WTC11 (cell line): ENCODE measurements at regions of chr2 and their contacts with region 1.

Region 1: DNA sequence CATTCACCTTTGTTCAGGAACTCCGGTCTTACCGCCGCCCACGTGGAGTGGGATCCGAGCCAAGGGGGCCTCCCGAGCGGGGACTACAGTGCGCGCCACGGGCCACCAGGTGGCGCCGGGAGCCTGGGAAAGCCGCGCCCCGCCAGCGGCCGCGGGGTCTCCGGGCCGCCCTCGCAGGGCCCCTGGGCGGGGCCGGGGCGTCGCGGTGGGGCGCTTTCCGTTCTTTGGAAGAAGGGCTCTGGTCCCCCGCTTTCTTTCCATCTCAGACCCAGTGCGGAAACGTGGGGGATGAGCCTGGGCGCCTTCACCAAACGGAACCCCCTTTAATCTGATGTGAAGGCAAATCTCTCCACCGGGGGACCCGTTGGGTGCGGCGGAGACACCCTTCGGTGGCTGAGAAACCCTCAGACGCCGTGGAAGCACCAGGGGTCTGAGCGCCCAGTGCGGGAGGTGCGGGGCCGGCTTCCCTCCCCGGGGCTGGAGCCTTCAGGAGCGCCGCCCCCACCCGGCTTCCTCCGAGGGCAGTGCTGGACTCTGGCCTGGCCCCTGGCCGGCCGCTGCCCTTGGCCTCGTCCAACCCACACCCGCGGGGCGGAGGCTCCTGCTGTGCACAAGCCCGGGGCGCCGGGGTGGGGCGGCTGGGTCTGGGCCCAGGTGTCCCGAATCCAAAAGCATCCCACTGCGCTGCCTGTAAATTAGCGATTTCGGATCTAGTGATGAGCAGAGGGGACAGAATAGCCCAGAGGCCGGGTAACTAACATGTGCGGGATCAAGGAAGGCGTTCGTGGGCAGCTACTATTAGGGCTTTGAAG is 44.6 kb downstream of the GORASP2 start:
- DNase-seq: peak; percentile 83
- ATAC-seq: peak; percentile 85
- H3K4me3 Mint-ChIP-seq: peak overlapping the region; percentile 57
- H3K27ac Mint-ChIP-seq: no peak overlapping the region
- H3K4me1 Mint-ChIP-seq: peaks cover 53% of the 10 kb centered on the region
- H3K27me3 Mint-ChIP-seq: peaks cover 4% of the 10 kb centered on the region
- CTCF ChIP-seq: peak; percentile 88

Region 2: GRCh38 chr2:170928824-170929685 is 44.6 kb before region 1 on chr2 and contains the start of gene GORASP2:
- CTCF ChIA-PET with region 1: interaction called, 34 read pairs
- POLR2A ChIA-PET with region 1: no interaction called
- DNase-seq: peak; percentile 99
- ATAC-seq: peak; percentile 97
- H3K4me3 Mint-ChIP-seq: peak within 1 kb of the TSS; percentile 91
- H3K27ac Mint-ChIP-seq: peak within 1 kb of the TSS; percentile 97
- H3K4me1 Mint-ChIP-seq: peaks cover 46% of the 10 kb centered on the region
- H3K27me3 Mint-ChIP-seq: no peaks in the 10 kb centered on the region
- CTCF ChIP-seq: peak; percentile 91
- total RNA-seq, gene GORASP2: 77.8 to 102 TPM (median 79.2 TPM) in 3 replicates

Region 3: DNA sequence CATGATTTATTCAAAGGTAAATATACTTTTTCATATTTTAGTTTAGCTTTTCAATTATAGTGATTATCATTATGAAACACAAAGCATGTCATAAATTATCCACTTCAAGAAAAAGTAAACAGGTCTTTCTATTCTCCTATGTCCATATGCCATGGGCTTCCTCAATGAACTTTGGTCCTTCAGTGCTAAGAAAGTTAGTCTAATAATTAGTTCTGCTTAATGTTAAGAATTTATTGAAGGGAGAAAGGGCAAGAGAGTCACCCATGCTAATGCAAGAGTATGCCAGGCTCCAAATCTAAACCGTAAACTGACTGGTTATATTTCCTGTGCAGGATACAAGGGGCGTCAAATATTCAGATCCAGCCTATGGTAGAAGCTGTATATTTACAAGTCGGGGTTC is 51.5 kb after region 1 on chr2:
- CTCF ChIA-PET with region 1: no interaction called
- POLR2A ChIA-PET with region 1: no interaction called
- DNase-seq: no peak
- ATAC-seq: no peak
- H3K4me3 Mint-ChIP-seq: no peak overlapping the region
- H3K27ac Mint-ChIP-seq: 0 out of 2 replicates have a peak overlapping the region, but pooled peaks have one; percentile 16
- H3K4me1 Mint-ChIP-seq: peaks cover 15% of the 10 kb centered on the region
- H3K27me3 Mint-ChIP-seq: no peaks in the 10 kb centered on the region
- CTCF ChIP-seq: no peak

Region 4: GRCh38 chr2:171086352-171087290 is 112.9 kb after region 1 on chr2:
- CTCF ChIA-PET with region 1: interaction called, 18 read pairs
- POLR2A ChIA-PET with region 1: interaction called, 3 read pairs
- DNase-seq: peak; percentile 62
- ATAC-seq: peak; percentile 91
- H3K4me3 Mint-ChIP-seq: no peak overlapping the region
- H3K27ac Mint-ChIP-seq: peak overlapping the region; percentile 88
- H3K4me1 Mint-ChIP-seq: peaks cover 36% of the 10 kb centered on the region
- H3K27me3 Mint-ChIP-seq: no peaks in the 10 kb centered on the region
- CTCF ChIP-seq: peak; percentile 38; the same call in 1 of the 2 replicates

Region 5: DNA sequence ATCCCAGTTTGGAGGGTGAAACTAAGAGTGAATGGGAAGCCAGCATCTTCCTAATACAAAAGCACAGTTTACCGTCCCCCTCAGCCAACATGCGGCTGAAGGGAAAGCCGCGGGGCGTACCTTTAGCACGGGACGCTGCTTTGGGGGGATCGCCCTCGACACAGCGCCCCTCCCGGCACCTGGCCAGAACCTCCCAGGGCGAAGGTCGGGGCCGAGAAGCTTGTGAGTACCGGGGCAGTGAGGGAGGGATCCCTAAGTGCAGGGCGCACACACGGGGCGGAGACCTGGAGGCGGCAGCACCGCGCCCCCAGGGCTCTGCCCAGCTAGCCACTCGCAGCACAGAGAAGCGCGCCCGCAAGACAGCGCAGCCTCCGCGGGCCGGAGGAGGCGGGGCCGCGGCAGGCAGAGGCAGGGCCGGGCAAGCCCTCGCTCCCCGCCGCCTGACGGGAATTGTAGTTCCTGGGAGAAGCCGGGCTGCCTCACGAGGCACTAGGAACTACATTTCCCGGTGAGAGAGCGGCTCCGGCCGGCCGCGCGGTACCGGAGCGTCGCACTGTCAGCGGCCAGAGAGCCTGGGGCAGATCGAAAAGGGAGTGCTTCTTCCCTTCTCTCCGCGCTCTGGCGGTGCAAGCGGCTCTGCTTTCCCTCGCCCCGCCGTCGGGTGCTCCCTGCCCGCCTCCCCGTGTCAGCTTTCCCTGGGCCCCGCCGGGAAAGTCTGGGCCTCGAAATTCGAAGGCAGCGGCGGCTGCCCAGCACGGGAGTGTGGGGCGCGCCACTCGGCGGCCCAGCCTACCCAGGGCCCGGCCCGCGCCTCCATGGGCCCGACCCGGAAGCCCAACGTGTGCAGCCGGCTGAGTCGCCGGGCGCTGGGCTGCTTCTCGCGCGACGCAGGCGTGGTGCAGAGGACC is 460.3 kb after region 1 on chr2 and contains the starts of genes DCAF17 and METTL8:
- CTCF ChIA-PET with region 1: interaction called, 10 read pairs
- POLR2A ChIA-PET with region 1: interaction called, 3 read pairs
- DNase-seq: peak; percentile 97
- ATAC-seq: peak; percentile 95
- H3K4me3 Mint-ChIP-seq: peak within 1 kb of the TSS; percentile 87
- H3K27ac Mint-ChIP-seq: peak within 1 kb of the TSS; percentile 96
- H3K4me1 Mint-ChIP-seq: peaks cover 46% of the 10 kb centered on the region
- H3K27me3 Mint-ChIP-seq: no peaks in the 10 kb centered on the region
- CTCF ChIP-seq: peak; percentile 30; the same call in 1 of the 2 replicates
- total RNA-seq, gene DCAF17: 27.2 to 34.0 TPM (median 30.5 TPM) in 3 replicates
- total RNA-seq, gene METTL8: 47.8 to 59.1 TPM (median 53.4 TPM) in 3 replicates